Prostate gland (tissue), 2 donors: ENCODE measurements at regions of chr12 and their contacts with region 1.

Region 1: GRCh38 chr12:116599285-116600136 is 40.3 kb downstream of the MAP1LC3B2 start:
- DNase-seq: peak; percentile 82
- H3K4me3 ChIP-seq: peak overlapping the region in 1 of 2 donors; percentile 15
- H3K27ac ChIP-seq: peak overlapping the region; percentile 76
- H3K4me1 ChIP-seq: no peaks in the 10 kb centered on the region
- H3K27me3 ChIP-seq: no peaks in the 10 kb centered on the region
- CTCF ChIP-seq: peak; percentile 45 to 73 (median 56)
- POLR2A ChIP-seq: no peak

Region 2: GRCh38 chr12:115998119-115998633 is 601.3 kb before region 1 on chr12:
- intact Hi-C with region 1: loop called (anchors 5 kb)
- DNase-seq: no peak
- H3K4me3 ChIP-seq: no peak overlapping the region
- H3K27ac ChIP-seq: peak overlapping the region; percentile 61 to 62
- H3K4me1 ChIP-seq: peaks cover 5% of the 10 kb centered on the region
- H3K27me3 ChIP-seq: no peaks in the 10 kb centered on the region
- CTCF ChIP-seq: peak; percentile 63 to 98 (median 86)
- POLR2A ChIP-seq: no peak

Region 3: GRCh38 chr12:116015525-116015924 is 584.0 kb before region 1 on chr12:
- intact Hi-C with region 1: loop called (anchors 2 kb)
- DNase-seq: no peak
- H3K4me3 ChIP-seq: no peak overlapping the region
- H3K27ac ChIP-seq: no peak overlapping the region
- H3K4me1 ChIP-seq: peaks cover 2% of the 10 kb centered on the region
- H3K27me3 ChIP-seq: no peaks in the 10 kb centered on the region
- CTCF ChIP-seq: peak in 3 of 4 experiments; percentile 47 to 69 (median 64)
- POLR2A ChIP-seq: no peak

Region 4: DNA sequence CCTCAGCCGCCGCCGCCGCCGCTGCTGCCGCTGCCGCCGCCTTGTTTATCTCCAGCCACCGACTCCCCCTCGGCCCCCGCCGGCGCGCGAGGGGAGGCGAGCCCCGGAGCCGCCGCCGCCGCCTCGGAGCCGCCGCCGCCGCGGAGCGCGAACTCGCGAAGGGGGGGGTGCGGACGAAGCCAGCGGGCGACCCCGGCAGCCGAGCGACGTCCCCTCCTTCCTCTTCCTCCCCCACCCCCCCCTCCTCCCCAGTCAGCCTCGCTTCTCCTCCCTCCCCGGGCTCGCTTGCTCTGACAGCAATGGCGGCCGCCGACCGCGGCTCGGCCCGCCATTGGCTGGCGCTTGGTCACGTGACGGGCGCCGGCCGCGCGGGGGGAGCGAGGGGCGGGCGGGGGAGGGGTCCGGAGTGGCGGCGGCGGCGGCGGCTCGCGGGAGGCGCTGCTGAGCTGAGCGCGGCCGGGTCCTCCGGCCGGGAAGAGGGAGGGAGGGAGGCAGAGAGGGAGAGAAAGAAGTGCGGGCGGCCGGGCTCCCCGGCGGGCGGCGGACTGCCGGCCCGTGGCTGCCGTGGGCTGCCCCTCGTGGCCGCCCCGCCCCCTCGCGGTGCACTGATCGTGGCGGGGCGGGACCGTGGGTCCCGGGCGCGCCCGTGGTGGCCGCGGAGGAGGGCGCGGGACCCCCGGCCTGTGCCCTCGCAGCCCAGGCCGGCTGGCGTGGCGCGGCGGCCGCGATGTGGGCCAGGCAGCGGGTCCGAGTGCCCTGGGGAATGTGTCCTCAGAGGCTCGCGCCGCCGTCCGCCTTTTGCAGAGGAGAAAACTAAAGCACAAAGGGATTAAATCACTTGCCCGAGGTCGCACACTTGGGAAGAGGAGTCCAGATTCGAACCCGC is 321.9 kb before region 1 on chr12 and contains the start of gene MED13L:
- intact Hi-C with region 1: loop called (anchors 5 kb)
- DNase-seq: peak; percentile 87
- H3K4me3 ChIP-seq: peak within 1 kb of the TSS; percentile 63 to 72
- H3K27ac ChIP-seq: peak within 1 kb of the TSS; percentile 89 to 94
- H3K4me1 ChIP-seq: no peaks in the 10 kb centered on the region
- H3K27me3 ChIP-seq: no peaks in the 10 kb centered on the region
- CTCF ChIP-seq: peak; percentile 28 to 62 (median 52)
- POLR2A ChIP-seq: peak; percentile 31
- total RNA-seq, gene MED13L: 88.9 to 140 TPM

Region 5: GRCh38 chr12:116455540-116456329 is 143.8 kb before region 1 on chr12:
- intact Hi-C with region 1: loop called (anchors 5 kb)
- DNase-seq: peak; percentile 71
- H3K4me3 ChIP-seq: no peak overlapping the region
- H3K27ac ChIP-seq: peak overlapping the region in 1 of 2 donors; percentile 8
- H3K4me1 ChIP-seq: no peaks in the 10 kb centered on the region
- H3K27me3 ChIP-seq: no peaks in the 10 kb centered on the region
- CTCF ChIP-seq: no peak
- POLR2A ChIP-seq: no peak

Region 6: GRCh38 chr12:116525418-116526001 is 74.0 kb before region 1 on chr12:
- intact Hi-C with region 1: loop called (anchors 5 kb)
- DNase-seq: peak; percentile 84
- H3K4me3 ChIP-seq: peak overlapping the region in 1 of 2 donors; percentile 6
- H3K27ac ChIP-seq: peak overlapping the region; percentile 68 to 70
- H3K4me1 ChIP-seq: peaks cover 9% of the 10 kb centered on the region
- H3K27me3 ChIP-seq: no peaks in the 10 kb centered on the region
- CTCF ChIP-seq: no peak
- POLR2A ChIP-seq: no peak